Calu3 (cell line): ENCODE measurements at regions of chr15 and their contacts with region 1.

Region 1: DNA sequence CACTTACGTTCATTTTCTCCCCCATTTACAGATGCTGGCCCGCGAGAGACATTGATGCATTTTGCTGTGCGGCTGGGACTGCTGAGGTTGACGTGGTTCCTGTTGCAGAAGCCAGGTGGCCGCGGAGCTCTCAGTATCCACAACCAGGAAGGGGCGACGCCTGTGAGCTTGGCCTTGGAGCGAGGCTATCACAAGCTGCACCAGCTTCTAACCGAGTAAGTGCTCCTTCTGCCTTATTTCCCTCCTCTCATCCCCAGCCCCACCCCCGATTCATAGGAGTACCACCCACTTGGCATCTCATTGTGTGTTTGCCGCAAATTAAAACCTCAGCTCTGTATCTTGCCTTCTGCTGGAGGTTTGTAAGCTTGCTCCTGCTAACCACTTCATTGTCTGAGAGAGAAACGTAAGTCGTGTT is 163.3 kb downstream of the AKAP13 start:
- DNase-seq: peak; percentile 56
- H3K4me3 Mint-ChIP-seq: peak overlapping the region; percentile 25
- H3K27ac Mint-ChIP-seq: peak overlapping the region; percentile 70
- H3K4me1 Mint-ChIP-seq: peaks cover 84% of the 10 kb centered on the region
- H3K27me3 Mint-ChIP-seq: no peaks in the 10 kb centered on the region
- CTCF ChIP-seq: no peak

Region 2: GRCh38 chr15:85456798-85457197 is 87.0 kb before region 1 on chr15:
- CTCF ChIA-PET with region 1: no interaction called
- intact Hi-C with region 1: no loop called
- DNase-seq: no peak
- H3K4me3 Mint-ChIP-seq: no peak overlapping the region
- H3K27ac Mint-ChIP-seq: no peak overlapping the region
- H3K4me1 Mint-ChIP-seq: peaks cover 55% of the 10 kb centered on the region
- H3K27me3 Mint-ChIP-seq: no peaks in the 10 kb centered on the region
- CTCF ChIP-seq: no peak

Region 3: GRCh38 chr15:85563328-85563727 is 19.6 kb after region 1 on chr15:
- CTCF ChIA-PET with region 1: interaction called, 3 read pairs
- intact Hi-C with region 1: loop called (anchors 2 kb)
- DNase-seq: peak; percentile 52
- H3K4me3 Mint-ChIP-seq: peak overlapping the region; percentile 17
- H3K27ac Mint-ChIP-seq: peak overlapping the region; percentile 80
- H3K4me1 Mint-ChIP-seq: peaks cover 40% of the 10 kb centered on the region
- H3K27me3 Mint-ChIP-seq: no peaks in the 10 kb centered on the region
- CTCF ChIP-seq: no peak

Region 4: GRCh38 chr15:85607842-85608241 is 64.1 kb after region 1 on chr15:
- CTCF ChIA-PET with region 1: no interaction called
- intact Hi-C with region 1: no loop called
- DNase-seq: no peak
- H3K4me3 Mint-ChIP-seq: no peak overlapping the region
- H3K27ac Mint-ChIP-seq: no peak overlapping the region
- H3K4me1 Mint-ChIP-seq: peaks cover 16% of the 10 kb centered on the region
- H3K27me3 Mint-ChIP-seq: no peaks in the 10 kb centered on the region
- CTCF ChIP-seq: no peak

Region 5: GRCh38 chr15:85661859-85662258 is 118.1 kb after region 1 on chr15:
- CTCF ChIA-PET with region 1: no interaction called
- intact Hi-C with region 1: loop called (anchors 5 kb)
- DNase-seq: no peak
- H3K4me3 Mint-ChIP-seq: no peak overlapping the region
- H3K27ac Mint-ChIP-seq: no peak overlapping the region
- H3K4me1 Mint-ChIP-seq: peaks cover 7% of the 10 kb centered on the region
- H3K27me3 Mint-ChIP-seq: no peaks in the 10 kb centered on the region
- CTCF ChIP-seq: no peak